IMR-90 (cell line): ENCODE measurements at regions of chr9 and their contacts with region 1.

Region 1: GRCh38 chr9:69719367-69719766 is 40.4 kb downstream of the PTAR1 start:
- DNase-seq: peak; percentile 73
- ATAC-seq: peak; percentile 73
- H3K4me3 ChIP-seq: no peak overlapping the region
- H3K27ac ChIP-seq: peak overlapping the region; percentile 53; the same call in 1 of the 2 replicates
- H3K4me1 ChIP-seq: peaks cover 4% of the 10 kb centered on the region
- H3K27me3 ChIP-seq: no peaks in the 10 kb centered on the region
- CTCF ChIP-seq: no peak
- POLR2A ChIP-seq: no peak
- RAD21 ChIP-seq: no peak

Region 2: DNA sequence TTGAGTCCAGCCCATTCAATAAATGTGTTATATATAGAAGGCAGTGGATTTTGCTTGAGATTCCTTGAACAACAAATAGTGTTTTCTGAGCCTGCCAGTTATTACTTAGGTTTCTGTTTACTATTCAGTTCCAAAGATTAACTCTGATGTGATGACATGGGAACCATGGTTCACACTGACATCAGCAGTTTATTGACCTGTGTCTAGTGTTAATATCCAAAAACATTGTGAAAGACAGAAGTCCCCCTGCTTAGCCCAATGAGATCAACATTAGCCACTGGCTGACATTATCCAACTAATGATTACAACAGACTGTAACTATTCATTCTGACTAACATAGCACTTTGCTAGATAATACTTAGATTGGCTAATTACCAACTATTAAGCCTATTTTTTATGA is 62.1 kb before region 1 on chr9:
- CTCF ChIA-PET with region 1: no interaction called
- POLR2A ChIA-PET with region 1: no interaction called
- dilution Hi-C with region 1: no loop called
- in situ Hi-C with region 1: no loop called
- intact Hi-C with region 1: no loop called
- DNase-seq: peak; percentile 35
- ATAC-seq: no peak
- H3K4me3 ChIP-seq: no peak overlapping the region
- H3K27ac ChIP-seq: no peak overlapping the region
- H3K4me1 ChIP-seq: peaks cover 3% of the 10 kb centered on the region; the same call in 1 of the 2 replicates
- H3K27me3 ChIP-seq: no peaks in the 10 kb centered on the region
- CTCF ChIP-seq: no peak
- POLR2A ChIP-seq: no peak
- RAD21 ChIP-seq: no peak

Region 3: DNA sequence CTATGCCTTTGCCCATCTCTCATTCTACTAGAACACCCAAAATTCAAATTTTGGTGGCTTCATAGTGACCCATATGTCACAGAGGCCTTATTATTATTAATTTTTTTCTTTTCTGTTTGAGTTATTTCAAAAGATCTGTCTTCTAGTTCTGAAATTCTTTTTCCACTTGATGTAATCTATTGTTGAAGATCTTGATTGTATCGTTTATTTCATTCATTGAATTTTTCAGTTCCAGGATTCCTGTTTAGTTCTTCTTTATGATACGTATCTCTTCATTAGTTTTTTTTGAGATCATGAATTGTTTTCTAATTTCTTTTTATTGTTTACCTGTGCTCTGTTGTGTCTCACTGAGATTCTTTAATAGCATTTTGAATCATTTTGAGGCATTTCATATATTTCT is 22.6 kb before region 1 on chr9:
- CTCF ChIA-PET with region 1: no interaction called
- POLR2A ChIA-PET with region 1: no interaction called
- dilution Hi-C with region 1: no loop called
- in situ Hi-C with region 1: no loop called
- intact Hi-C with region 1: loop called (anchors 1 kb)
- DNase-seq: no peak
- ATAC-seq: no peak
- H3K4me3 ChIP-seq: no peak overlapping the region
- H3K27ac ChIP-seq: no peak overlapping the region
- H3K4me1 ChIP-seq: no peaks in the 10 kb centered on the region
- H3K27me3 ChIP-seq: no peaks in the 10 kb centered on the region
- CTCF ChIP-seq: no peak
- POLR2A ChIP-seq: no peak
- RAD21 ChIP-seq: no peak